ENCODE measurements at regions of chrX and their contacts with region 1.

Region 1: DNA sequence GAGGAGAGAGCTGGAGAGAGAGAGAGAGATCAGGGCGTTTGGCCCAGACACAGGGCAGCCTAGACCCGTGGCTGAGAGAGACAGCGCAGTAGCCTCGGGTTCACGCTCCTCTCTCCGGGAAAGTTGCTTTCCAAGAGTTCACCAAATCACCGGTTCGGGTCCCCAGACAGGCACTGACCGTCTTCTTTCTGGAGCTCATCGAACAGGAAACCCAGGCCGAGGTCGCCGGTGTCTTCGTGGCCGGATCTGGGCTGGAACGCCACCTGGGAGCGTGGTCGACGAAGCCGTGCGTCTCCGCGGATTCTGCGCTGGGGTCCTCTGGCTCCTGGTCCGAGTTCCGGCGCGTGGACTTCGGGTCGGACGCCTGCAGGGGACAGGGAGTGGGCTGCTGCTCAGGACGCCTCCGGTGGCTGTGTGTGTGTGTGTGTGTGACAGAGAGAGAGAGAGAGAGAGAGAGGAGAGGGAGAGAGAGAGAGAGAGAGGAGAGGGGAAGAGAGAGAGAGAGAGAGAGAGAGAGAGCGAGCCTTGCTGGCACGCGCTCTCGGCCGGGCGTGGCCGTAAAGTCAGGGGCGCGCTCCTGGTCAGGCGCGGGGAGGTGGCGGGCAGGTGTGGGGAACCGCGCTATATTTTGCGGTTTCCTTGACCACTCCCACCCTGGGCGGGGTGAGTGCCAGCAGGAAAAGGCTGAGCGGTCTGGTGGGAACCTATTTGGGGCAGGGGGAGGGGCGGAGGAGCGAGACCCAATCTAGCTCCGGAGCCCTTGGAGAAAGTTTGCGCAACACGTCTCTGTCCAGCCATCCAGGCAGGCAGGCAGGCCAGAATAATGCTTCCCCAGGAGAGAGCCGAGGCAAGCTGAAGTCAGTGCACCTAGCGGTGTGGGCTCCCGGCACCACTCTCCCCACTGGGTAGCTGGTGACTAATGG is 62.1 kb downstream of the RHOXF2B start:
- DNase-seq: no peak
- CTCF ChIP-seq: no peak

Region 2: GRCh38 chrX:120144178-120144844 is 128.9 kb after region 1 on chrX:
- in situ Hi-C with region 1: loop called (anchors 25 kb)
- DNase-seq: no peak
- CTCF ChIP-seq: no peak